Activated CD8-positive, alpha-beta memory T cell treated with anti-CD3 and anti-CD28 coated beads, Interleukin-2, amount 10 ng/mL, durations not matched to agents 7 days and 5 days (primary cell): ENCODE measurements at regions of chr16 and their contacts with region 1.

Region 1: GRCh38 chr16:69709456-69710084 is 16.8 kb downstream of the NQO1 start:
- DNase-seq: no peak
- ATAC-seq: peak; percentile 71
- H3K4me3 Mint-ChIP-seq: no peak overlapping the region
- H3K27ac Mint-ChIP-seq: no peak overlapping the region
- H3K4me1 Mint-ChIP-seq: peaks cover 3% of the 10 kb centered on the region
- H3K27me3 Mint-ChIP-seq: no peaks in the 10 kb centered on the region

Region 2: DNA sequence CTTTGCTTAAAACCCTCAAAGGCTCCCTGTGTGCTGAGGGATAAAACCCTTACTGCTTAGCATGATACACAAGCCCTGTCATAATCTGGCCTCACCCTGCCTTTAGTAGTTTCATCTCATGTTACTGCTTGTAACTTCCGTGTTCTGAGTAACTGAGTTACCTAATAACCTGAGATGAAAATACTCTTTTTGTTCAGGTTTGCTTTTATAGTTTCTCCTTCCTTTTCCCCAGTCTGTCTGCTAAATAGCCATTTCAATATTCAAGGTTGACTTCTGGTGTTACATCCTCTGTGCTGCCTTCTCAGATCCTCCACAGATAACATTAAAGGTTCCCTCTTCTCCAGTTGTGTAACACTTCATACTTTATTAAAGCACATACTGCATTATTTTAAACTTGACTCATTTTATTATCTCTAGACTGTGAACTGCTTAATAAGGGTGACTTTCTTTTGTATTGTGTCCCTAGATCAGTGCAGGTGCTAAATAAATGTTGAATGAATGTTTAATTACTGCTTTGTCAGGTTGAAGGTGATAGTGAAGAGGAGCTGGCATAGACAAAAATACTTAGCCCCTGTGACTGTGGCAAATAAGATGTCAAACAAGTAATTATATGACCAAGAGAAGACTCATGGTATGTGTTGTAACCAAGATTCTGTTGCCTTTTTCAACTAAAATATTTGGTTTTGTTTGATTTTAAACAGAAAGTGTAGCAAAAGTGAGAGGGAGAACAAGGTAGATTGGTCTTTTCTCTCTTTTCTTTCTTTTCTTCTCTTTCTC is 96.0 kb before region 1 on chr16:
- CTCF ChIA-PET with region 1: no interaction called
- DNase-seq: no peak
- ATAC-seq: no peak
- H3K4me3 Mint-ChIP-seq: no peak overlapping the region
- H3K27ac Mint-ChIP-seq: no peak overlapping the region
- H3K4me1 Mint-ChIP-seq: peaks cover 20% of the 10 kb centered on the region
- H3K27me3 Mint-ChIP-seq: no peaks in the 10 kb centered on the region

Region 3: DNA sequence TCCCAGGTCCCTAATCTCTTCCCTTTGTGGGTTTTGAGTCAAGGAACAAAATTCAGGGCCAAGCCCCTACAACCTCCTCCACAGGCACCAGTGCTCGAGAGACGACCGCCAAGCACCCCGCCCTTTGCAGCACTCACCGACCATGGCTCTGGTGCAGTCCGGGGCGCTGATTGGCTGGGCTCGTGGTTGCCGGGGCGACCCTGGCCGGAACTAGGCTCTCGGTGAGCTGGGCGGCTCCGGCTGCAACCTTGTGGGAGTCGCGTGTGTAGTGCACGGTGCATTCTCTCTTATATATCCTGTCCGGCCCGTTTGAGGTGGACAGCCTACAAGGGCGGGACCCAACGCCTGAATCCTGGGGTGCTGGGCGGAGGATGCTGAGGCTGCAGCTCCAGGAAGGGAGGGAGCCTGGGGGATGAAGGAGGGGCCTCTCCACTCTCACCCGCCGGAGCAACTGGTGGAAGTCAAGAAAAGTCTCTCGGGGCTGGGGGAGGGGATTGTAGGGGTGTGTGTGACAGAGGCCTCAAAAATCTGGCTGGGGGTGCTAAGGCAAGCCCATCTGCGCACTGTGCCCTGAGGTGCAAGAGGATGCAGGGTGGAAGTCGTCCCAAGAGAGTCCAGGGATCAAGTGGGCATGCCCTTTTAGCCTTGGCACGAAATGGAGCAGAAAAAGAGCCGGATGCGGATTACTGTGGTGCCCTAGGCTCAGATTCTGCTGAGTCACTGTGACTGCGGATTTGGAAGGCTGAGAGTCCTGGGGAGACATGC is 16.9 kb after region 1 on chr16 and contains the start of gene NQO1:
- CTCF ChIA-PET with region 1: interaction called, 19 read pairs
- DNase-seq: peak; percentile 97
- ATAC-seq: peak; percentile 99
- H3K4me3 Mint-ChIP-seq: peak within 1 kb of the TSS; percentile 86
- H3K27ac Mint-ChIP-seq: peak within 1 kb of the TSS; percentile 93
- H3K4me1 Mint-ChIP-seq: peaks cover 54% of the 10 kb centered on the region
- H3K27me3 Mint-ChIP-seq: no peaks in the 10 kb centered on the region
- total RNA-seq, gene NQO1: 22.6 to 27.2 TPM

Region 4: GRCh38 chr16:69754469-69755310 is 45.1 kb after region 1 on chr16 and contains the start of gene NOB1:
- CTCF ChIA-PET with region 1: interaction called, 67 read pairs
- DNase-seq: peak; percentile 98
- ATAC-seq: peak; percentile 96
- H3K4me3 Mint-ChIP-seq: peak within 1 kb of the TSS; percentile 100
- H3K27ac Mint-ChIP-seq: peak within 1 kb of the TSS; percentile 97
- H3K4me1 Mint-ChIP-seq: peaks cover 31% of the 10 kb centered on the region
- H3K27me3 Mint-ChIP-seq: no peaks in the 10 kb centered on the region
- total RNA-seq, gene NOB1: 61.4 to 84.2 TPM

Region 5: DNA sequence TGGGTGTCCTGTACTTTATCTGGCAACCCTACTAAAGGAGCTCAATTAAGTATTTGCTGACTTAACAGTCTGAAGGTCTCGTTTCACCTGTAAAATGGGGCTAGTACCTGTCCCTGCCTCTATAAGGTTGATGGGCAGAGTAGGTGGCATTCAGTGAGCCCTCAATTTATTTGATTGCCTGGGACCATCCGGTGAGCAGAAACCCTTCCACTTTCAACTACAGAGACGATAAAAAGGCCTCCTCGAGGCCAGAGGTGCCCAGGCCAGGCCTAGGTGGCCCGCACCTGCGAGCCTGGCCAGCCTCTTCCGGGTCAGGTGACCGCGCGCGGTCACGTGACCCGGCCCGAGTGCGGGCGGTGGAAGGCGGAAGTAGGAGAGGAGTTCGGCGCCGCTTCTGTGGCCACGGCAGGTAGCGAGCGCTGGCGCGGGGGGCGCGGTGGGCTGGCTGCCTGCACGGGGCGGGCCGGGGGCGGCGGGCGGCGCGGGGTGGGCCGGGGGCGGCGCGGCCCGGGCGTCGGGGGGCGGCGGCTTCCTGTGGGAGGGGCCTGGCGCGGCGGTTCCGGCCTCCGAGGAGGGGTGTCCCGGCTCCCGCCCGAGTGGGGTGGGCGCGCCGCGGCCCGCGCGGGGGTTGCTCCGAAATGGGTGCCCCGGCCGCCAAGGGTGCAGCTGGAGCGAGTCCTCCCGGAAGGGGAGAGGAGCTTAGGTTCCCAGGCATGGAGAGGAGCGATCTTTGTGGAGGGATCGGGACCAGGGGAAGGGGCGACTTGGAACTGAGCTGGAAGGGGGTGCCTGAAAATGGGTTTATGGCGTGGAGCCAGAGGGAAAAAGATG is 52.6 kb after region 1 on chr16 and contains the start of gene WWP2:
- CTCF ChIA-PET with region 1: interaction called, 10 read pairs
- DNase-seq: peak; percentile 81
- ATAC-seq: peak; percentile 94
- H3K4me3 Mint-ChIP-seq: peak within 1 kb of the TSS; percentile 93
- H3K27ac Mint-ChIP-seq: peak within 1 kb of the TSS; percentile 94
- H3K4me1 Mint-ChIP-seq: peaks cover 29% of the 10 kb centered on the region
- H3K27me3 Mint-ChIP-seq: no peaks in the 10 kb centered on the region
- total RNA-seq, gene WWP2: 56.8 to 58.8 TPM

Region 6: DNA sequence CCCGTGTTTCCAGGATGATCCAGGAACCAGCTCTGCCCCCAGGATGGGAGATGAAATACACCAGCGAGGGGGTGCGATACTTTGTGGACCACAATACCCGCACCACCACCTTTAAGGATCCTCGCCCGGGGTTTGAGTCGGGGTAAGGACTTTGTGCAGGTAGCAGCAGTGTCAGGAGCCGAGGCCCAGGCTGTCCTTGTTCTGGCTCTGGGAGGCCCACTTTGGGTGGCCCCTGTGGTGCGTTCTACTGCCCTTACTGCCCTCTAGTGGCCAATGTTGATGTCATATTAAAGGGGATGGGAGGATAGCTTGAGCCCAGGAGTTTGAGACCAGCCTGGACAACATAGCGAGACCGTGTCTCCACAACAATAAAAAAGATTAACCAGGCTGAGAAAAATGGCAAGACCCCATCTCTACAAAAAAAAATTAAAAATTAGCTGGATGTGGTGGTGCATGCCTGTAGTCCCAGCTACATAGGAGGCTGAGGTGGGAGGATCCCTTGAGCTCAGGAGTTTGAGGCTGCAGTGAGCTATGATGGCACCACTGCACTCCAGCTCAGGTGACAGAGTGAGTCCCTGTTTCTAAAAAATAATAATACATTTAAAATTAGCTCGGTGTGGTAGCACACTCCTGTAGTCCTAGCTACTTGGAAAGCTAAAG is 220.7 kb after region 1 on chr16:
- CTCF ChIA-PET with region 1: interaction called, 10 read pairs
- DNase-seq: peak; percentile 53
- ATAC-seq: peak; percentile 90
- H3K4me3 Mint-ChIP-seq: no peak overlapping the region
- H3K27ac Mint-ChIP-seq: no peak overlapping the region
- H3K4me1 Mint-ChIP-seq: peaks cover 4% of the 10 kb centered on the region
- H3K27me3 Mint-ChIP-seq: no peaks in the 10 kb centered on the region